ENCODE measurements at regions of chrX and their contacts with region 1.

Region 1: GRCh38 chrX:25851141-25851540 is 287.0 kb upstream of the MAGEB18 start:
- DNase-seq: no peak
- ATAC-seq: no peak
- H3K4me3 ChIP-seq: no peak overlapping the region
- H3K27ac ChIP-seq: no peak overlapping the region
- H3K4me1 ChIP-seq: peaks cover 0 to 9% (median 0%) of the 10 kb centered on the region in 9 donors
- H3K27me3 ChIP-seq: peaks cover 0 to 6% (median 0%) of the 10 kb centered on the region in 7 donors
- CTCF ChIP-seq: no peak

Region 2: DNA sequence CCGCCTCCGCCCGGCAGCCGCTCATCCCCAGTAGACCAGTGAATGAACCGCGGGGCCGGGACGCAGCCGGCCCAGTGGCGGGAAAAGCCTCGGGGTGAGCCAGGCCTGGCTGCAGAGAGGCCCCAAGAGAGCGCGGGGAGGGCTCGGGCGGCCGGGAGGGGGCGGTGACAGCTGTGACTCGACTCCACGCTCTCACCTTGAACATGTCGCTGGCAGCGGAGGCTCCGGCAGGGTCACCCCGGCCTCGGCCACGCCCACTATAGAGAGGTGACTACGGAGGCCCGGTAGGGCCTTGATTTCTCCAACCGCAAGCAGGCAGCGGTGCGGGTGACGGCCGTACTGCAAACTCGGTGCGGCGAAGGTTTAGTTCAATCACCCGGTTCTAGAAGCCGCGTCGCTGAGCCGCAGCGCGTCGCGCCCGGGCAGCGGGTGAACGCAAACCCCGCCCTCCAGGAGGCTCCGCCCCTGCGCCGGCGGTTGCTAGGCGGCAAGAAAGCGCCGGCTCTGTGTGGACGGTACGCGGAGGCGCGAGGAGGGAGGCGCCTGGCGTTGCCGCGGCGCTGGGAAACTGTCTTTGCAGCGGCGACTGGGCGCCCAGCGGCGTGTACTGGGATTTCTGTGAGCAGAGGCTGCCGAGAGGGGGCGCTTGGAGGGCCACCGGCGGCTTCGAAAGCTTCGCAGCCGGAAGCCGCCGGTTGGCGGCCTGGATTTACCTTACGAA is 1943.5 kb before region 1 on chrX and contains the starts of genes APOO and CXorf58:
- intact Hi-C with region 1: no loop called
- DNase-seq: peak; percentile 89 to 91
- ATAC-seq: peak; percentile 96 to 99 (median 98)
- H3K4me3 ChIP-seq: peak within 1 kb of the TSS; percentile 50 to 75 (median 65)
- H3K27ac ChIP-seq: peak within 1 kb of the TSS; percentile 78 to 95 (median 88)
- H3K4me1 ChIP-seq: peaks cover 0 to 16% (median 2%) of the 10 kb centered on the region in 9 donors
- H3K27me3 ChIP-seq: peaks cover 0 to 26% (median 0%) of the 10 kb centered on the region in 7 donors
- CTCF ChIP-seq: peak; percentile 49 to 89 (median 74)
- total RNA-seq, gene APOO: 73.5 to 132 (median 103) TPM
- total RNA-seq, gene CXorf58: 0.13 to 1.1 (median 0.33) TPM in 8 of 10 donors, not detected in the others

Region 3: DNA sequence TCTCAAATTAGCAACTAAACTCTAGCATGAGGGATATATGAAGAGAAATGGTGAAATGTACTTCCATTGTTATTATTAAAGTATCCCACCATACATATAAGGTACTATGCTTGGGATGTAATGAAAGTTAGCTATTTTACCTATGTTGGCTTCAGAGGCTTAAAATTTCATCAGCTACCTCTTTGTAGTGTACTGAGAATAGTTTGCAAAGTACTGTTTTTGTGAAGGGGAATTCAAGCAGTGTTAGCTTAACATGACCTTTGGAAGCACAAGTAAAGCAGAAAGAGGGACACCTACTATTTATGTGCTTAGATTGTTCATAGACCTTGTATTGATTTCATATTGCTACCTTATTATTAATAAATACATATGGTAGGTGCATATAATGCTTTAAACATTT is 1600.2 kb after region 1 on chrX:
- intact Hi-C with region 1: loop called in 1 of 10 experiments (anchors 5 kb)
- DNase-seq: no peak
- ATAC-seq: no peak
- H3K4me3 ChIP-seq: no peak overlapping the region
- H3K27ac ChIP-seq: no peak overlapping the region
- H3K4me1 ChIP-seq: no peaks in the 10 kb centered on the region
- H3K27me3 ChIP-seq: no peaks in the 10 kb centered on the region
- CTCF ChIP-seq: no peak